Activated CD4-positive, alpha-beta memory T cell treated with anti-CD3 and anti-CD28 coated beads for 36 hours (primary cell): ENCODE measurements at regions of chr7 and their contacts with region 1.

Region 1: GRCh38 chr7:992709-993607 is 10.0 kb downstream of the CYP2W1 start:
- DNase-seq: peak; percentile 96
- H3K4me3 Mint-ChIP-seq: no peak overlapping the region
- H3K27ac Mint-ChIP-seq: no peak overlapping the region
- H3K4me1 Mint-ChIP-seq: no peaks in the 10 kb centered on the region
- H3K27me3 Mint-ChIP-seq: no peaks in the 10 kb centered on the region

Region 2: DNA sequence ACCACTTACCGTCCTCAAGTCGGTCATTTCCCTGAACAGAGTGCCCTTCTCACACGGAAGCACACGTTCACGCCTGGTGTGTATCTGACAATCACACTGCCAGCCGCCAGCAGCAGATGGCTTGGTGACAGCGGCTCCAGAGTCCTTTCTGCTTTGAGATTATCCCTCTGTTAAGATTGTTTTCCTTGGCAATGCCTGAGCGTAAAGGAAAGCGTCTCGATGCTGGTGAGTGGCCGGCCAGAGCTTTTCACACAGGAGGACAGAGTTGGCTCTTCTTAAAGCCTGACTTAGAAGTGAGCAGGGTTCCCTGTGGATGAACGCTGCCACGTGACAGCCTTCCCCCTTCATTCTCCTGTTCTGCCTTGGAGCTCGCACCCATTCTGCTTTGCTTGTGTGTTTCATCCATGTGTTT is 243.8 kb before region 1 on chr7:
- CTCF ChIA-PET with region 1: no interaction called
- POLR2A ChIA-PET with region 1: no interaction called
- intact Hi-C with region 1: no loop called
- DNase-seq: no peak
- H3K4me3 Mint-ChIP-seq: no peak overlapping the region
- H3K27ac Mint-ChIP-seq: no peak overlapping the region
- H3K4me1 Mint-ChIP-seq: no peaks in the 10 kb centered on the region
- H3K27me3 Mint-ChIP-seq: no peaks in the 10 kb centered on the region

Region 3: GRCh38 chr7:974820-975681 is 17.9 kb before region 1 on chr7 and contains the start of gene COX19:
- CTCF ChIA-PET with region 1: interaction called, 53 read pairs
- POLR2A ChIA-PET with region 1: no interaction called
- intact Hi-C with region 1: no loop called
- DNase-seq: peak; percentile 94
- H3K4me3 Mint-ChIP-seq: peak within 1 kb of the TSS; percentile 95
- H3K27ac Mint-ChIP-seq: peak within 1 kb of the TSS; percentile 90
- H3K4me1 Mint-ChIP-seq: peaks cover 27% of the 10 kb centered on the region
- H3K27me3 Mint-ChIP-seq: no peaks in the 10 kb centered on the region
- total RNA-seq, gene COX19: 14.1 to 15.6 TPM

Region 4: GRCh38 chr7:1012004-1012715 is 19.2 kb after region 1 on chr7:
- CTCF ChIA-PET with region 1: interaction called, 12 read pairs
- POLR2A ChIA-PET with region 1: no interaction called
- intact Hi-C with region 1: no loop called
- DNase-seq: no peak
- H3K4me3 Mint-ChIP-seq: no peak overlapping the region
- H3K27ac Mint-ChIP-seq: no peak overlapping the region
- H3K4me1 Mint-ChIP-seq: peaks cover 6% of the 10 kb centered on the region
- H3K27me3 Mint-ChIP-seq: no peaks in the 10 kb centered on the region

Region 5: DNA sequence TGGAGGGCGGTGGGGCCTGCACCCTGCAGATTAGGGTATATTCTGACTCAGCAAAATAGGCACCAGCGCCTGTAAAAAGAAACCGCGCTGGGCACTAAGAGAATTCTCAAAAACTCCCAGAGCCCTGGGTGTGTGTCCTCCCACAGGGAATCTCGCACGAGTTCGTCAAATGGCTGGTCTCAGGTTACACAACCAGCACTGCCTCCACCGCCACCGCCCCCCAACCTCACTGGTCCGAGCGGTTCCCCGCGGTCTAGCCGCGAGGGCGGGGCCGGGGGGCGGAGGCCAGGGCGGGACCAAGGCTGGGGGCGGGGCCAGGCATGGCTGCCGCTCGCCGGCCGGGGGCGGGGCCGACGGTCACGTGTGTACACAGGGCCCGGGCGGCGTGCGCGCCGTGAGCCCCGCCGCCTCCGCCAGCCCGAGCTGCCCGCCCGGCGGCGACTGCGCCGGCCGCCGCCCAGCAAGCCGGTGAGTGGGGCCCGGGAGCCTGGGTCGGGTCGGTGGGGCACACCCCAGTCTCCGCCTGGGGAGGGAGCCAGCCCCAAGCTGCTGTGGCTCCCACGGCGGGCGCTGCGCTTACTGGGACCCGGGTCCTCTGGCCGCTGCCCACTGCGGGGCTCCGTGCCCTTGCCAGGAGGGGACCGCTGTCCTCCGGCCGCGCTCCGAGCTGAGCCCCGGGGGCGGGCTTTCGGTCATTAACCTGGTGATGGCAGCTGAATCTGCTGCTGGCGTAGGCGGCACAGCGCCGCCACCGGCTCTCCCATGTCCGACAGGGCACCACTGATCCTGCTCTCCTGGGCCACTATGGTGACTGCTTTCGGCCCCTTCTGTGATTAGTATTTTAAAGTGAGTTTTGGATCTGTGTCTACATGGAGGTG is 51.5 kb after region 1 on chr7 and contains the start of gene GPR146:
- CTCF ChIA-PET with region 1: interaction called, 28 read pairs
- POLR2A ChIA-PET with region 1: no interaction called
- intact Hi-C with region 1: loop called (anchors 1 kb)
- DNase-seq: peak; percentile 95
- H3K4me3 Mint-ChIP-seq: peak within 1 kb of the TSS; percentile 76
- H3K27ac Mint-ChIP-seq: peak within 1 kb of the TSS; percentile 76
- H3K4me1 Mint-ChIP-seq: peaks cover 60% of the 10 kb centered on the region
- H3K27me3 Mint-ChIP-seq: no peaks in the 10 kb centered on the region
- total RNA-seq, gene GPR146: 1.6 to 2.1 TPM

Region 6: DNA sequence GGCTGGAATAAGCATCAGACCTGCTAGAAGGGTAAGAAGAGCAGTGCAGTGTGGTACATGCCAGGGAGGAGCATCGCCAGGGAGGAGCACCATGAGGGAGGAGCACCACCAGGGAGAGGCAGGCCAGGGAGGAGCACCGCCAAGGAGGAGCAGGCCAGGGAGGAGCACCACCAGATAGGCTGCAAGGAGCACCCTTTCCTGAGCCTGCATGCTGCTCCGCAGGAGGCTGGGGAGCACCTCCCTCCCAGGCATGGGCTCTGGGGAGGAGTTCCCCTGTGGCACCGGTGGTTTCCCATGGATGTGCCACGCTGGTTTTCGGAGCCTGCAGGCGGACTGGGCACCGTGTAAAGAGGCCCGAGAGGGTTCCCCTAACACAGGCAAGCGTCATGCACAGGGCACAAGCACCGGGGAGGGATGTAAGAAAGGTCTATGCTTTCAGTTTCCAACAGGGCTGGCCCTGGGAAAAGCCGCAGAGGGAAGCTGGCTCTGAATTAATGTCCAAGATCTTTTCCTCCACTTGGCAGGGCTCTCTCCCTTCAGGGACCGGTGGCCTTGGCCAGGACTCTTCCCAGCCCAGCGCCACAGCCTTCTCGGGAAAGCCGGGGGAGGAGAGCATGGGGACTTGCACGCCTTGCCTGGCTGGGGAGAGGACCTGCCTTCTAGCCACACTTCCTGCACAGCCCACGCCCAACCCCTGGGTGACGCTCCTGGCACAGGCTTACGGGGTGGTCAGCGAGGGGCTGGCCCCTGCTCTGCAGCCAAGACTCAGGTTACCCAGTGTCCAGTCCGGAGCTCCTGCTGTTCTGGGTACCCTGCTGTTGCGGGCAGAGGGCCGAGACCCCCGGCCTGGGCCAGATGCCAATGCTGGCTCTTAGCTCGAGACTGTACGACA is 83.5 kb after region 1 on chr7:
- CTCF ChIA-PET with region 1: interaction called, 12 read pairs
- POLR2A ChIA-PET with region 1: no interaction called
- intact Hi-C with region 1: no loop called
- DNase-seq: no peak
- H3K4me3 Mint-ChIP-seq: no peak overlapping the region
- H3K27ac Mint-ChIP-seq: peak overlapping the region; percentile 54
- H3K4me1 Mint-ChIP-seq: no peaks in the 10 kb centered on the region
- H3K27me3 Mint-ChIP-seq: no peaks in the 10 kb centered on the region

Region 7: GRCh38 chr7:1169409-1170368 is 176.7 kb after region 1 on chr7:
- CTCF ChIA-PET with region 1: interaction called, 20 read pairs
- POLR2A ChIA-PET with region 1: interaction called, 3 read pairs
- intact Hi-C with region 1: no loop called
- DNase-seq: peak; percentile 98
- H3K4me3 Mint-ChIP-seq: peak overlapping the region; percentile 85
- H3K27ac Mint-ChIP-seq: peak overlapping the region; percentile 91
- H3K4me1 Mint-ChIP-seq: peaks cover 13% of the 10 kb centered on the region
- H3K27me3 Mint-ChIP-seq: no peaks in the 10 kb centered on the region